Cardiac septum (tissue), 1 donor: ENCODE measurements at regions of chr18 and their contacts with region 1.

Region 1: DNA sequence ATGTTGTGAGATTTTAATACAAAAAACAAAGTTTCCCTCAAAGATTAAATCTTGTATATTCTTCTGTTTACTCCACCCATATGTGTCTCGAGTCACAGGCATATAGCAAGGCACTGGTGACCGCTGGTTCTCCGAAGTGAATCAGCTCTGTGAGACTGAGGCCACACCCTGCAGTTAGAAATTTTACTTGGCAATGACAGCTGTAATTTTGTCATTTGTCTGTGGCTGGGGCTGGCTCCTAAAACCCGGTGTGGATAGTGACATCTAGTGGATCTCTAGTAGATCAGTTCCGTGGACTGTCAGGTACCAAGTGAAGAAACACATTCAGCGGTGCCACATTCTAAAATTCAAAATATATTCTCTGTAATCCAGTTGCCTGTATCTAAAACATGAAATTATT is 278.0 kb downstream of the NEDD4L start:
- DNase-seq: no peak

Region 2: GRCh38 chr18:57881818-57882413 is 440.1 kb before region 1 on chr18:
- intact Hi-C with region 1: loop called (anchors 10 kb)
- DNase-seq: no peak

Region 3: DNA sequence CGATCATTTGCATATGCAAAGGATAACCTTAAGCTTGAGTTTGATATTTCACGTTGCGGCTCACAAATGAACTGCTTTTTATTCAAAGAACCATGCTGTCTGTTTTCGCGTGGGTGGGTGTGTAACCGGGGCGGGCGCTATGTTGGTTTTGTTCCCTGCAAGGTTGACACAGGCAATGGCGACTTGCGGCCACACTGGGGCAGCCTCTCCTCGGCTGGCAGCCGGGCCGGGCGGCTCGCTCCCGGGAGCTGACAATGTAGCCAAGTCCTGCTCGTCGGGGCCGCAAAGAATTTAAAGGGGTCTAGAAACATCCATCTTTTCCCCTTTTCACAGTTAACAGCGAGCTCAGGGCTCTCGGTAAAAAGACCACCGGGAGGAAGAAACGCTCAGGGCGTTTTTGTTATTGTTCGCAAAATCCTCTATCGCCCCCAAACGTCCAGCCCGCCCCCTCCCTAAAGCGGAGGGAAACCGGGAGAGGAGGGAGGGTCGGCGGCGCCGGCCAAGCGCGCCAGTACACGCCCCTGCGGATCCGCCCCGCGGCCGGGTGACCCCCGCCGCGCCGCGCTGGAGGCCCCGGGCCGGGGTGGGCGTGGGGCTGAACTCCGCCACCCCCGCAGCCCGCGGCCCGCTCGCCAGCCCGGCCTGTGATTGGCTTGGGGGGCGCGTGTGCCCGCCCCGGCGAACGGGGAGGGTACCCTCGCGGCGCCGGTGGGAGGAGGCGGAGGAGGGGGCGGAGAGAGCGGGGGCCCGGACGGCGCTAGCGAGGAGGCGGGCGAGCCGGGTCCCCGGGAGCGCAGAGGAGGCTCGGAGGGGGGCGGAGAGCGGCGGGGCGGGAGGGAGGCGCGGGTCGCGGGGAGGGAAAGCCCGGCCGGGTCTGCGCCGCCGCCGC is 278.3 kb before region 1 on chr18 and contains the start of gene NEDD4L:
- intact Hi-C with region 1: loop called (anchors 5 kb)
- DNase-seq: peak; percentile 85
- total RNA-seq, gene NEDD4L: 49.3 TPM

Region 4: GRCh38 chr18:58135701-58136331 is 186.2 kb before region 1 on chr18:
- intact Hi-C with region 1: loop called (anchors 5 kb)
- DNase-seq: no peak

Region 5: DNA sequence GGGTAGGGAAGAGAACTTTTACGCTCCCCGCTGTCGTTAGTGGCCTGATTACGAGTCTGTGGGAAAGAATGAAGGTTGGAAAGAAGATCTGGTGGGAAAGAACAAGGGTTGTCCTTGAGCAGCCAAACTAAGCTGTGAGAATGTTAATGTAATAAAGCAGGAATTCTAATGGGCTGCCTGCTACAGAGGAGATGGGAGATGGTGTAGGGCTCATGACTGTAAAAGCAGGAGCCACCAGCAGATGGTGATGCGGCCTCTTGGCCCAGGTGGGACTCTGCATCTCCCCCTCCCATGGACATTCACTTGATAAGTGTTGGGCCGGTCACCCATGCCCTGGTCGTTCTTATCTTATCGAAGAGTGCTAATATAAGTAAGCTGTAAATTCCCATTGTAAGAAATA is 128.0 kb before region 1 on chr18:
- intact Hi-C with region 1: loop called (anchors 5 kb)
- DNase-seq: no peak